ENCODE measurements at regions of chr1 and their contacts with region 1.

Region 1: DNA sequence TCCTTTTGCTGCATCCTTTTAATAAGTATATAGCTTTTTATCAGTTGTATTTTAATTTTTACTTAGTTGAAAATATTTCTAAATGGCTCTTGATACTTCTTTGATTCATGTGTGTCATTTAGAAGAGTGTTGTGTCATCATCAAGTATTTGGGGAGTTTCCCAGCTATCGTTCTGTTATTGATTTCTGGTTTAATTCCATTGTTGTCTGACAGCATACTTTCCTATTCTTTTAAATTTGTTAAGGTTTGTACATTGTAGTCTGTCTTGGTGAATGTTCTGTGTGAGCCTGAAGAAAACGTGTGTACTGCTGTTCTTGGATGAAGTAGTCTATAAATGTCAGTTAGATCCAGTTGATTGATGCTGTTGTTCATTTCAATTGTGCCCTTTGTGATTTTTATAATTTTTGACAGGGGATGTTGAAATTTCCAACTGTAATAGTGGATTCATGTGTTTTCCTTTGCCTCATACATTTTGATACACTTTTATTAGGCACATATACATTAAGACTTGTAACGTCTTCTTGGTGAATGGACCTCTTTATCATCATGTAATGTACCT is 24.8 kb downstream of the SDCCAG8 start:
- DNase-seq: no peak
- H3K4me3 Mint-ChIP-seq: no peak overlapping the region
- H3K27ac Mint-ChIP-seq: peak overlapping the region; percentile 36
- H3K4me1 Mint-ChIP-seq: peaks cover 16% of the 10 kb centered on the region
- H3K27me3 Mint-ChIP-seq: no peaks in the 10 kb centered on the region
- CTCF ChIP-seq: no peak

Region 2: GRCh38 chr1:243294723-243295121 is 14.1 kb after region 1 on chr1:
- CTCF ChIA-PET with region 1: interaction called, 10 read pairs
- POLR2A ChIA-PET with region 1: interaction called, 4 read pairs
- intact Hi-C with region 1: no loop called
- DNase-seq: peak; percentile 79
- H3K4me3 Mint-ChIP-seq: peak overlapping the region; percentile 2
- H3K27ac Mint-ChIP-seq: peak overlapping the region; percentile 96
- H3K4me1 Mint-ChIP-seq: peaks cover 28% of the 10 kb centered on the region
- H3K27me3 Mint-ChIP-seq: no peaks in the 10 kb centered on the region
- CTCF ChIP-seq: no peak